ENCODE measurements at regions of chr12 and their contacts with region 1.

Region 1: DNA sequence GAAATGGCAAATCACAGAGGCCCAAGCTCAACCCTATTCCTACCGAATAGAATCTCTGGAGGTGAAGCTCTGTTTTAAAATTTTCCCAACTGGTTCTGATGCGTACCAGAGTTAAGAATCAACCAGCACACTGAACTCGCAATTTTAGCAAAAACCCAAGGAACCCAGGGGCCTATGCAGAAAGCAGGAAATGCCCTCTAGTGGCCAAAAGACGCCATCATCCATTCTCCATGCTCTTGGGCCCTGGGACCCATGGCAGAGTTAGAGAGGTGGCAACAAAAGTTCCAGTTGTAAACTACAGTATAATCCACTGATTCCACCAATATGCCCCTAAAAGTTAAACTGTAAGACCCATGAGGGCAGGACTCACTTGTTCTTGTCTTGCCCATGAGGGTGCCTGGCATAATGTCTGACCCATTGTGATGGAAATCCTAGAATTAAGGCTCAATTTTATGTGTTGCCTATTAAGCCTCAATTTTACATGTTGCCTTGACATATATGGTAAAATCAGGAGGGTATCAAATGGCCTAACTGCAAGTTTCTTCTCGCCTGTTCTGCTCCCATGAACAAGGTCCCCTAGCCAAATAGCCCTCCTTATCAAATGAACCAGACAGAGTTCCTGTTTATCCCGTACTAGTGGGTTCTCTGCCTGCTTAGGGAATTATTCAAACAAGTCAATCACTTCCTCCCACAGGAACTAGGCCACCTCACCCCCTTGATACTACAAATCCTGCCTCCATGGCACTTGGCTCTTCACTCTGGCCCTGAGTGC is 137.5 kb upstream of the CPM start:
- DNase-seq: peak; percentile 80
- ATAC-seq: peak; percentile 79
- H3K4me3 Mint-ChIP-seq: no peak overlapping the region
- H3K27ac Mint-ChIP-seq: no peak overlapping the region
- H3K4me1 Mint-ChIP-seq: peaks cover 19% of the 10 kb centered on the region
- H3K27me3 Mint-ChIP-seq: peaks cover 14% of the 10 kb centered on the region

Region 2: GRCh38 chr12:68358532-68359485 is 711.7 kb before region 1 on chr12:
- CTCF ChIA-PET with region 1: no interaction called
- POLR2A ChIA-PET with region 1: no interaction called
- intact Hi-C with region 1: loop called in 1 of 2 experiments (anchors 5 kb)
- DNase-seq: peak; percentile 78
- ATAC-seq: peak; percentile 80
- H3K4me3 Mint-ChIP-seq: no peak overlapping the region
- H3K27ac Mint-ChIP-seq: peak overlapping the region; percentile 13
- H3K4me1 Mint-ChIP-seq: peaks cover 29% of the 10 kb centered on the region
- H3K27me3 Mint-ChIP-seq: no peaks in the 10 kb centered on the region

Region 3: GRCh38 chr12:68865399-68866164 is 204.9 kb before region 1 on chr12:
- CTCF ChIA-PET with region 1: interaction called, 6 read pairs
- POLR2A ChIA-PET with region 1: no interaction called
- intact Hi-C with region 1: loop called (anchors 1 kb)
- DNase-seq: no peak
- ATAC-seq: no peak
- H3K4me3 Mint-ChIP-seq: no peak overlapping the region
- H3K27ac Mint-ChIP-seq: peak overlapping the region; percentile 19
- H3K4me1 Mint-ChIP-seq: peaks cover 8% of the 10 kb centered on the region
- H3K27me3 Mint-ChIP-seq: no peaks in the 10 kb centered on the region

Region 4: GRCh38 chr12:68932961-68933893 is 137.3 kb before region 1 on chr12 and contains the start of gene CPM:
- CTCF ChIA-PET with region 1: no interaction called
- POLR2A ChIA-PET with region 1: no interaction called
- intact Hi-C with region 1: loop called (anchors 2 to 5 kb)
- DNase-seq: peak; percentile 86
- ATAC-seq: peak; percentile 98
- H3K4me3 Mint-ChIP-seq: peak within 1 kb of the TSS; percentile 80
- H3K27ac Mint-ChIP-seq: peak within 1 kb of the TSS; percentile 71
- H3K4me1 Mint-ChIP-seq: peaks cover 9% of the 10 kb centered on the region
- H3K27me3 Mint-ChIP-seq: peaks cover 20% of the 10 kb centered on the region
- total RNA-seq, gene CPM: 18.0 to 18.7 TPM

Region 5: DNA sequence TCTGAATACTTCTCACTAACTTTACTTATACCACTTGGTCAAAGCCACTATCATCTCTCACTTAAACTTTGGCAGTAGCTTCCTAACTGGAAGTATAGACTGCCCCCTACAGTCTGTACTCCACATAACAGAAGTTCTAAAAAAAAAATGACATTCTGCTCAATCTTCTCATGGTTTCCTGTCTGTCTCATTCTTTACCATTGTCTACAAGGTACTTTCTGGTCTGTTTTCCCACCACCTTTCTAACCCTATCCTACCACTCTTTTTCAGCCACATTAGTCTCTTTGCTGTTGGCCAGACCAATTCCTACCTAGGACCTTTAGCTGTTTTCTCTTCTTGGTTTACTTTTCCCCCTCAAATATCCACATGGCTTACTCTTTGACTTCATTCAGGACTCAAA is 183.5 kb after region 1 on chr12:
- CTCF ChIA-PET with region 1: interaction called, 4 read pairs
- POLR2A ChIA-PET with region 1: no interaction called
- intact Hi-C with region 1: loop called in 1 of 2 experiments (anchors 5 kb)
- DNase-seq: no peak
- ATAC-seq: peak; percentile 91
- H3K4me3 Mint-ChIP-seq: no peak overlapping the region
- H3K27ac Mint-ChIP-seq: peak overlapping the region; percentile 59
- H3K4me1 Mint-ChIP-seq: peaks cover 37% of the 10 kb centered on the region
- H3K27me3 Mint-ChIP-seq: no peaks in the 10 kb centered on the region